CD4-positive, alpha-beta memory T cell (primary cell): ENCODE measurements at regions of chr6 and their contacts with region 1.

Region 1: DNA sequence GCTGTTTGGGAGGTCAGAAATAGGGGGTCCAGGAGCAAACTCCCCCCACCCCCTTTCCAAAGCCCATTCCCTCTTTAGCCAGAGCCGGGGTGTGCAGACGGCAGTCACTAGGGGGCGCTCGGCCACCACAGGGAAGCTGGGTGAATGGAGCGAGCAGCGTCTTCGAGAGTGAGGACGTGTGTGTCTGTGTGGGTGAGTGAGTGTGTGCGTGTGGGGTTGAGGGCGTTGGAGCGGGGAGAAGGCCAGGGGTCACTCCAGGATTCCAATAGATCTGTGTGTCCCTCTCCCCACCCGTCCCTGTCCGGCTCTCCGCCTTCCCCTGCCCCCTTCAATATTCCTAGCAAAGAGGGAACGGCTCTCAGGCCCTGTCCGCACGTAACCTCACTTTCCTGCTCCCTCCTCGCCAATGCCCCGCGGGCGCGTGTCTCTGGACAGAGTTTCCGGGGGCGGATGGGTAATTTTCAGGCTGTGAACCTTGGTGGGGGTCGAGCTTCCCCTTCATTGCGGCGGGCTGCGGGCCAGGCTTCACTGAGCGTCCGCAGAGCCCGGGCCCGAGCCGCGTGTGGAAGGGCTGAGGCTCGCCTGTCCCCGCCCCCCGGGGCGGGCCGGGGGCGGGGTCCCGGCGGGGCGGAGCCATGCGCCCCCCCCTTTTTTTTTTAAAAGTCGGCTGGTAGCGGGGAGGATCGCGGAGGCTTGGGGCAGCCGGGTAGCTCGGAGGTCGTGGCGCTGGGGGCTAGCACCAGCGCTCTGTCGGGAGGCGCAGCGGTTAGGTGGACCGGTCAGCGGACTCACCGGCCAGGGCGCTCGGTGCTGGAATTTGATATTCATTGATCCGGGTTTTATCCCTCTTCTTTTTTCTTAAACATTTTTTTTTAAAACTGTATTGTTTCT is at the start of gene VEGFA:
- DNase-seq: peak; percentile 85 to 87 (median 86)
- H3K4me3 ChIP-seq: peak within 1 kb of the TSS; percentile 82 to 90
- H3K4me3 Mint-ChIP-seq: peak within 1 kb of the TSS; percentile 85 to 98 (median 92)
- H3K27ac ChIP-seq: peak within 1 kb of the TSS; percentile 23
- H3K27ac Mint-ChIP-seq: peak within 1 kb of the TSS; percentile 54 to 89 (median 86)
- H3K4me1 ChIP-seq: peaks cover 14% of the 10 kb centered on the region
- H3K4me1 Mint-ChIP-seq: peaks cover 3 to 29% (median 18%) of the 10 kb centered on the region in 4 donors
- H3K27me3 ChIP-seq: peaks cover 5% of the 10 kb centered on the region
- H3K27me3 Mint-ChIP-seq: peaks cover 16 to 23% of the 10 kb centered on the region in 2 donors
- total RNA-seq, gene VEGFA: 0.29 to 1.1 TPM

Region 2: DNA sequence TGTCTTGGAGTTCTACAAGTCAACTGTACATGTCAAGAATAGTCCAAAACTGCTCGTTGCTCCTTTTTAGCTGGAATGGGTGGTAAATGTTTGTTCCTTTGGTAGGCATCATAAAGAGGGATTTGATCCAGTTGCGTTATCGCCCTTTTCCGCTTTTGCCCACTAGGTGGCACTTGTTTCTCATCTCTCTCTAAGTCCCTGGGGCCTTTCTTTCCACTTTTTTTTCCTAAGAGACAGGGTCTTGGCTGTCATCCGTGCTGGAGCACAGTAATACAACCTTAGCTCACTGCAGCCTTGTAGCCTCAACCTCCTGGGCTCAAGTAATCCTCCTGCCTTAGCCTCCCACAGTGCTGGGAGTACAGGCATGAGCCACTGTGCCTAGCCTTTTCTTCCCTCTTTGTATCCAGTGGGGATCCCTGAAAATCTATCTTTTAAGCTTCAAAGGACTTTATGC is 161.4 kb before region 1 on chr6:
- CTCF ChIA-PET with region 1: interaction called, 3 read pairs
- POLR2A ChIA-PET with region 1: no interaction called
- intact Hi-C with region 1: loop called (anchors 10 kb)
- DNase-seq: peak; percentile 36 to 60 (median 49)
- H3K4me3 ChIP-seq: no peak overlapping the region
- H3K4me3 Mint-ChIP-seq: no peak overlapping the region
- H3K27ac ChIP-seq: no peak overlapping the region
- H3K27ac Mint-ChIP-seq: peak overlapping the region in 6 of 7 donors; percentile 1 to 78 (median 26)
- H3K4me1 ChIP-seq: no peaks in the 10 kb centered on the region
- H3K4me1 Mint-ChIP-seq: peaks cover 3 to 7% (median 6%) of the 10 kb centered on the region in 4 donors
- H3K27me3 ChIP-seq: no peaks in the 10 kb centered on the region
- H3K27me3 Mint-ChIP-seq: no peaks in the 10 kb centered on the region

Region 3: GRCh38 chr6:43723737-43724295 is 46.0 kb before region 1 on chr6:
- CTCF ChIA-PET with region 1: interaction called, 34 read pairs
- POLR2A ChIA-PET with region 1: interaction called, 4 read pairs
- intact Hi-C with region 1: loop called (anchors 1 kb)
- DNase-seq: peak; percentile 59 to 72 (median 62)
- H3K4me3 ChIP-seq: no peak overlapping the region
- H3K4me3 Mint-ChIP-seq: peak overlapping the region in 1 of 8 donors; percentile 17
- H3K27ac ChIP-seq: no peak overlapping the region
- H3K27ac Mint-ChIP-seq: peak overlapping the region in 6 of 7 donors; percentile 1 to 92 (median 38)
- H3K4me1 ChIP-seq: peaks cover 28% of the 10 kb centered on the region
- H3K4me1 Mint-ChIP-seq: peaks cover 18 to 45% (median 29%) of the 10 kb centered on the region in 4 donors
- H3K27me3 ChIP-seq: no peaks in the 10 kb centered on the region
- H3K27me3 Mint-ChIP-seq: no peaks in the 10 kb centered on the region

Region 4: DNA sequence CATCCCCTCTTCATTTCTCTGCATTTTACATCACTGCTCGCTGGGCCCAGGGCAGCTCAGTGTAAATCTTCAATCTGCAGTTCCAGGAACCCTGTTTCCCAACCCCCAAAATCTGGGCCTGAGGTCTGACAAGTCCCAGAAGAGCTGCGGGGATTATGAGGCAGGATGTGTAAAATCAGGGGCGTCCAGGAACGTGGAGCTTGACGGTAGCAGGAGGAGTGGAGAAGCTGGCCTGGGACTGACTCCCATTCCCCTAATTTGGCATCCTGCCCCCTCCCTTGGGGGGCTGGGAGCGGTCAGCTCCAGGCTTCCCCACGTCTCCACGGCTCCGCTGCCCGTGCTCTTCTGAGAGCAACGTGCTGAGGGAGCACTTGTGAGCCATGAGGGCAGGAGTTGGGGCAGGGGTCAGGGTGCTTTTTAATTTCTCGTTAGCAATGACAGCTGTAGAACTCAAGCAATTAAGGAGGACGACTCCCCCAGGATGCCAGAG is 23.1 kb before region 1 on chr6:
- CTCF ChIA-PET with region 1: interaction called, 22 read pairs
- POLR2A ChIA-PET with region 1: no interaction called
- intact Hi-C with region 1: no loop called
- DNase-seq: no peak
- H3K4me3 ChIP-seq: no peak overlapping the region
- H3K4me3 Mint-ChIP-seq: no peak overlapping the region
- H3K27ac ChIP-seq: no peak overlapping the region
- H3K27ac Mint-ChIP-seq: no peak overlapping the region
- H3K4me1 ChIP-seq: no peaks in the 10 kb centered on the region
- H3K4me1 Mint-ChIP-seq: no peaks in the 10 kb centered on the region
- H3K27me3 ChIP-seq: no peaks in the 10 kb centered on the region
- H3K27me3 Mint-ChIP-seq: peaks cover 11 to 13% of the 10 kb centered on the region in 2 donors

Region 5: DNA sequence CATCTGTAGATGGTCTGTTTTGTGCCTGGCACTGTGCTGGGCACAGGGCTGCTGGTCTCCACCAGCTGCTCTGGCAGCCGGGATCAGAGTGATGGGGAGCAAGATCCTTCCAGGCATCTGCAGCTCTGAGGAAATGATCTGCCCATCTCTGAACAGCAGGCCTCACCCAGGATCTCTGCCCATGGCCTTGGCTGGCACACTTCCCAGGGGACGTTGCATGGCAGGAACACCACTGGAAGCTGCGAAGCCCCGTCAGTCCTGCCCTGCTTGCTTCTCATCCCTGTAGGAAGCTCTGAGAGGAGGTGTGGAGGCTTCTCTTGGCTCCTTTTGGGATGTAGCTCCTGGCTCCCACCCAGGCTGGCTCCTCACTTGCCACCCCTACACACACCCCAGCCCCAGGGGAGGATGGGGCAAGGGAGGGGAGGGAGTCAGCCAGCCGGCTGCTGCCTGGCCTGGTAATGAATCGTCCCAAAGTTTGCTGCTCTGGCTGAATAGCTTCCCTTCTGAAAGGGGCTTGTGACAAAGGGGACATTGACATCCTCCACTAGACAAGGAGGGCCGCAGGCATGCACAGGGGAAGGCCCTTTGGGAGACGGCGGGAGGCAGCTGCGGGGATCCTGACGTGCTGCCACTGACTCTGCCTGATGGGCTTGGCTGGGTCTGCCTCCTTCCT is 109.2 kb after region 1 on chr6:
- CTCF ChIA-PET with region 1: no interaction called
- POLR2A ChIA-PET with region 1: no interaction called
- intact Hi-C with region 1: no loop called
- DNase-seq: no peak
- H3K4me3 ChIP-seq: no peak overlapping the region
- H3K4me3 Mint-ChIP-seq: no peak overlapping the region
- H3K27ac ChIP-seq: no peak overlapping the region
- H3K27ac Mint-ChIP-seq: no peak overlapping the region
- H3K4me1 ChIP-seq: no peaks in the 10 kb centered on the region
- H3K4me1 Mint-ChIP-seq: no peaks in the 10 kb centered on the region
- H3K27me3 ChIP-seq: no peaks in the 10 kb centered on the region
- H3K27me3 Mint-ChIP-seq: no peaks in the 10 kb centered on the region

Region 6: DNA sequence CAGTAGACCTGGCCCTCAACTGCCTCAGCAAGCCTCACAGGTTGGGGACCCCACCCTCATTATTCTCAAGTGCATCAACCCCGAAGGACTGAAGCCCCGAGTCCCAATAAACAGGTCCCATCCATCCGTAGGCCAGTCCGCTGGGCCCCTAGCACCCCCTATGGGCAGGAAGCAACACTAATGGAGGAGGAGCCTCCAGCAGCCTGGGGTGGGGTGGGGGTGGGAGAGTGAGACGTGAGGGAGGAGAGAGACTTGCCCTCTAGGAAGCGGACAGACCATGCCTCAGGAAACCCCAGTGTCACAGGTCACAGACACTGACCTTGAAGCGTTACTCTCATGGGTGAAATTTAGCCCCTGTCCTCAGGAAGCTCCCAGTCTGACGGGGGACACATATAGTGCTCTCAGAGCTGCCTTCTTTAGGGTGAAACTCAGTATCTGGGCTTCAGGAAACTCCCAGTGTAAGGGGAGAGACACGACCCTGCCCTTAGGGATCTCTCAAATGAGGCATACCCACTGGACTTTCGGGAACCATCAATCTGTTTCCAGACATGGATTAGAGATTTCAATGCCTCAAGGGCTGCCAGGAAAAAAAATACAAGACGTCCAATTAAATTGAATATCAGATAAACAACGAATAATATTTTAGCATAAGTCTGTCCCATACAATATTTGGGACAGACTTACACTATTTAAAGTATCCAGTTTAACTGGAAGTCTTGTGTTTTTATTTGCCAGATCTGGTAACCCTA is 231.7 kb after region 1 on chr6:
- CTCF ChIA-PET with region 1: interaction called, 3 read pairs
- POLR2A ChIA-PET with region 1: no interaction called
- intact Hi-C with region 1: loop called (anchors 2 kb)
- DNase-seq: no peak
- H3K4me3 ChIP-seq: no peak overlapping the region
- H3K4me3 Mint-ChIP-seq: peak overlapping the region in 5 of 8 donors; percentile 18 to 67 (median 48)
- H3K27ac ChIP-seq: no peak overlapping the region
- H3K27ac Mint-ChIP-seq: no peak overlapping the region
- H3K4me1 ChIP-seq: peaks cover 12% of the 10 kb centered on the region
- H3K4me1 Mint-ChIP-seq: peaks cover 0 to 5% (median 3%) of the 10 kb centered on the region in 4 donors
- H3K27me3 ChIP-seq: peaks cover 20% of the 10 kb centered on the region
- H3K27me3 Mint-ChIP-seq: peaks cover 22 to 40% of the 10 kb centered on the region in 2 donors

Region 7: DNA sequence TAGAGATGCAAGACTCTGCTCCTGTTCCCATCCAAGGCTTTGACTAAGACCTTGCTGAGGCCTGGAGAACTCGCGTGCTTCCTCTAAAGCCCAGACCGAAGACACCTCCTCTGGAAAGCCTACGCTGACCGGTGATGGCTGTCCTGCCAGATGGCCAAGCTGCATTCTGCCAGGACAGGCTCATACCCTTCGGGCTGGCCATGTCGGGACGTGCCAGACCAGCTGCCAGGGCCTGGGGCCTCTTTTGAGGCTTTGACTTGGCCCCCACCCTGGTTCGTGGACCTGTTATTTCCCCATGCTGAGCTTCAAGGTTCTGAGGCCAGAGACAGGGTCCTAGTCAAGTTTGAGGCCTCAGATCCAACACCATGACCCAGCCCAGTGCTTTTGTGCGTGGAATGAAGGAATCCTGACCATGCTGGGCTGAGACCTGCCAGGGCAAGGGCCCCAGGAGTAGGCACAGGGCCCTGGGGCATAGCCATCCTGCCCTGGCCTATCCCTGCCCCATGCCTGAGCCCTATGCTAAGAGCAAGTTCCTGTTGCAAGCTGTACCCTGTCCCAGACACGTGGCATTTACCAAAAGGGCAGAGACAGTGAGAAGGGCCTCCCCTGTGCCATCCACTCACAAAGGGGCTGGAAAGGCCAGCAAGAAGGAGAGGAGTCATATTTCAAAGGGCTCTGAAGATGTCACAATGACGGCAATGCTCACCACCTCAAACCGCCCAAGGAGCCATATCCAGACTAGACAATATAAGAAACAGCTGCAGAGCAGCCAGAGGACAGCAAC is 314.7 kb after region 1 on chr6:
- CTCF ChIA-PET with region 1: interaction called, 52 read pairs
- POLR2A ChIA-PET with region 1: no interaction called
- intact Hi-C with region 1: loop called (anchors 1 kb)
- DNase-seq: no peak
- H3K4me3 ChIP-seq: no peak overlapping the region
- H3K4me3 Mint-ChIP-seq: no peak overlapping the region
- H3K27ac ChIP-seq: no peak overlapping the region
- H3K27ac Mint-ChIP-seq: no peak overlapping the region
- H3K4me1 ChIP-seq: no peaks in the 10 kb centered on the region
- H3K4me1 Mint-ChIP-seq: peaks cover 0 to under 1% (median 0%) of the 10 kb centered on the region in 4 donors
- H3K27me3 ChIP-seq: no peaks in the 10 kb centered on the region
- H3K27me3 Mint-ChIP-seq: no peaks in the 10 kb centered on the region

Region 8: GRCh38 chr6:44315516-44315915 is 545.7 kb after region 1 on chr6:
- CTCF ChIA-PET with region 1: no interaction called
- POLR2A ChIA-PET with region 1: no interaction called
- intact Hi-C with region 1: no loop called
- DNase-seq: no peak
- H3K4me3 ChIP-seq: no peak overlapping the region
- H3K4me3 Mint-ChIP-seq: no peak overlapping the region
- H3K27ac ChIP-seq: no peak overlapping the region
- H3K27ac Mint-ChIP-seq: no peak overlapping the region
- H3K4me1 ChIP-seq: peaks cover 11% of the 10 kb centered on the region
- H3K4me1 Mint-ChIP-seq: peaks cover 5 to 22% (median 17%) of the 10 kb centered on the region in 4 donors
- H3K27me3 ChIP-seq: peaks cover 9% of the 10 kb centered on the region
- H3K27me3 Mint-ChIP-seq: peaks cover 10 to 27% of the 10 kb centered on the region in 2 donors